Heart right ventricle (tissue), 16 donors: ENCODE measurements at regions of chr2 and their contacts with region 1.

Region 1: DNA sequence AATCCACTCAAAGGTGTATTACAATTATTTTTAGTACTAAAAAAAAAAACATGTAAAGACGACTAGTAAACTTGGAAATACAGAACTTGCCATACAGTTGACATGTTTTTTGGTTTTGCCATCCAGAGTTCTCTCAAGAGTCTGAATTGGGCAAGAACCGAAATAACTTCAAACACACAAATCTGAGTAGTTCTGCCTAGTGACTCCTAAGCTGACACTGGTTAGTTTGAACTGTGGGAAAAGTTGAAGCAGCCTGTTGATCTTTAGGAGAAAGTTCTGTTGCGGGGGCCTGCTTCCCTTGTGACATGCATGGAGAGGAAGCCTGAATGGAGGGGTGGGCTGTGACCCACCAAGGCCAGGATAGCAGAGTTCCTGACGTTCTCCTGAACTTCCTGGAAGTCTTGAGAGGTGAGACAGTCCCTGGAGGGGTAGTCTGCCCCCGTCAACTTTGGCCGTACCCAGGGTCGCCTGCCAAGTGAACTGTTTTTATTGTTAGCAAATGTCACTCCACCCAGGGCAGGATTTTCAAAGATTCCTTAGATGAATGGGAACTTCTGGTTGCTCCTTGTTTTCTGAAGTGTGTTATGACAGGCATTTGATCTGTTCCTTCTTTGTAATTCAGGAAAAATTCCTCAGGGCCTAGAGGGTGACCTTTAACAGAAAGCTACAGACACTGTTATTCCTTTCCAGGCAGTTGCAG is 85.6 kb upstream of the SPTBN1 start:
- DNase-seq: peak; percentile 51 to 74
- ATAC-seq: peak; percentile 60 to 91 (median 84)
- H3K4me3 ChIP-seq: no peak overlapping the region
- H3K27ac ChIP-seq: peak overlapping the region; percentile 65 to 88 (median 78)
- H3K4me1 ChIP-seq: peaks cover 21 to 51% (median 35%) of the 10 kb centered on the region in 9 donors
- H3K27me3 ChIP-seq: no peaks in the 10 kb centered on the region
- CTCF ChIP-seq: no peak

Region 2: GRCh38 chr2:54394392-54394791 is 23.8 kb after region 1 on chr2:
- intact Hi-C with region 1: no loop called
- DNase-seq: no peak
- ATAC-seq: peak in 3 of 8 donors; percentile 28 to 47 (median 30)
- H3K4me3 ChIP-seq: peak overlapping the region in 1 of 10 donors; percentile 26
- H3K27ac ChIP-seq: peak overlapping the region in 6 of 10 donors; percentile 21 to 73 (median 38)
- H3K4me1 ChIP-seq: peaks cover 0 to 40% (median 9%) of the 10 kb centered on the region in 9 donors
- H3K27me3 ChIP-seq: no peaks in the 10 kb centered on the region
- CTCF ChIP-seq: no peak

Region 3: DNA sequence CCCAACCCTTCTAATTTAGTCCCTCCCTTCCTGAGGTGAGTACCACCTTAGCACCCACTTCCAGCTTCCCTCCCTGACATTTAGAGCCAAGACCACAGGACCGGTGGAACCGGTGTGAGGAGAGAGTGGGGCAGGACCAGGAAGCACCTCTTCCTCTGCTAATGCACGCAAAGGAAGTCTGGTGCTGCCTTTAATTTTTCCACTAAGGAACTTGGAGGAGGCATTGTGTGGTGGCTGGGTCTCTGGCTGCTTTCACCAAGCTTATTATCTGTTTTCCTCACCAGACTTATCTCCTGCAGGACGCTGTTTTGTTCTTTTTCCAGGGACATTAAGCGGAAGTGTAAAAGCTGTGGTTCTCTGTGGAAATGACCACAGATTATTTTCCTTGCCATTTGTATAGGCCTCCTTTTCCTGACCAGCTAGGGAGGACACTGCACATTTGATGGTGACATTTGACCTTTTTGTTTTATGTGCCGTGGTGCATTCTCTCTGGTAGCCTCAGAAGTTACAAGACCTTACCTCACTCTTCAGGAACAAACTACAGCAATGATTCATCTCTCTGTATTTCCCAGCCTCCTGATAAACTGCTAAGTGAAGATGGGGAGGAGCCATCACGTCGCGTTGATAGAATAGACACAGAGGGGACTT is 45.7 kb after region 1 on chr2:
- intact Hi-C with region 1: loop called in 2 of 10 experiments (anchors 5 kb)
- DNase-seq: peak in 1 of 2 donors; percentile 59
- ATAC-seq: peak; percentile 71 to 86 (median 82)
- H3K4me3 ChIP-seq: no peak overlapping the region
- H3K27ac ChIP-seq: peak overlapping the region; percentile 21 to 88 (median 78)
- H3K4me1 ChIP-seq: peaks cover 12 to 62% (median 51%) of the 10 kb centered on the region in 9 donors
- H3K27me3 ChIP-seq: no peaks in the 10 kb centered on the region
- CTCF ChIP-seq: no peak

Region 4: DNA sequence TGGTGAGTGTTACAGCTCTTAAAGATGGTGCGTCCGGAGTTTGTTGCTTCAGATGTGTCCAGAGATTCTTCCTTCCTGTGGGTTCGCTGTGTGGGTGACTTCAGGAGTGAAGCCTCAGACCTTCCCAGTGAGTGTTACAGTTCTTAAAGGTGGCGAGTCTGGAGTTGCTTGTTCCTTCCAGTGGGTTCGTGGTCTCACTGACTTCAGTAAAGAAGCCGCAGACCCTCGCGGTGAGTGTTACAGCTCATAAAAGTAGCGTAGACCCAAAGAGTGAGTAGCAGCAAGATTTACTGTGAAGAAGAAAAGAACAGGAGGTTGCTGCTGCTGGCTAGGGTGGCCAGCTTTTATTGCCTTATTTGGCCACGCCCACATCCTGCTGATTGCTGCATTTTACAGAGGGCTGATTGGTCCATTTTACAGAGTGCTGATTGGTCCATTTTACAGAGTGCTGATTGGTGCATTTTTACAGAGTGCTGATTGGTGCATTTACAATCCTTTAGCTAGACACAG is 51.6 kb after region 1 on chr2:
- intact Hi-C with region 1: loop called in 3 of 10 experiments (anchors 5 kb)
- DNase-seq: no peak
- ATAC-seq: no peak
- H3K4me3 ChIP-seq: no peak overlapping the region
- H3K27ac ChIP-seq: peak overlapping the region in 2 of 10 donors; percentile 9 to 46
- H3K4me1 ChIP-seq: peaks cover 8 to 87% (median 49%) of the 10 kb centered on the region in 9 donors
- H3K27me3 ChIP-seq: peaks cover 0 to 4% (median 0%) of the 10 kb centered on the region in 7 donors
- CTCF ChIP-seq: no peak

Region 5: GRCh38 chr2:54429811-54430551 is 59.4 kb after region 1 on chr2:
- intact Hi-C with region 1: loop called in 2 of 10 experiments (anchors 5 to 10 kb)
- DNase-seq: no peak
- ATAC-seq: peak; percentile 10 to 58 (median 40)
- H3K4me3 ChIP-seq: no peak overlapping the region
- H3K27ac ChIP-seq: peak overlapping the region; percentile 69 to 90 (median 81)
- H3K4me1 ChIP-seq: peaks cover 19 to 93% (median 68%) of the 10 kb centered on the region in 9 donors
- H3K27me3 ChIP-seq: no peaks in the 10 kb centered on the region
- CTCF ChIP-seq: no peak